Activated B cell treated with CpG ODN at 0.5 μM for 24 hours (primary cell): ENCODE measurements at regions of chr22 and their contacts with region 1.

Region 1: GRCh38 chr22:20418211-20418788 is 19.3 kb downstream of the SCARF2 start:
- DNase-seq: peak; percentile 66
- ATAC-seq: peak; percentile 90
- H3K4me3 Mint-ChIP-seq: peak overlapping the region; percentile 68
- H3K27ac Mint-ChIP-seq: no peak overlapping the region
- H3K4me1 Mint-ChIP-seq: peaks cover 4% of the 10 kb centered on the region
- H3K27me3 Mint-ChIP-seq: peaks cover 3% of the 10 kb centered on the region
- CTCF ChIP-seq: no peak

Region 2: GRCh38 chr22:20456064-20456721 is 37.9 kb after region 1 on chr22:
- CTCF ChIA-PET with region 1: interaction called, 68 read pairs
- POLR2A ChIA-PET with region 1: interaction called, 6 read pairs
- intact Hi-C with region 1: loop called (anchors 1 kb)
- DNase-seq: peak; percentile 60
- ATAC-seq: peak; percentile 100
- H3K4me3 Mint-ChIP-seq: no peak overlapping the region
- H3K27ac Mint-ChIP-seq: no peak overlapping the region
- H3K4me1 Mint-ChIP-seq: peaks cover 20% of the 10 kb centered on the region
- H3K27me3 Mint-ChIP-seq: no peaks in the 10 kb centered on the region
- CTCF ChIP-seq: no peak

Region 3: DNA sequence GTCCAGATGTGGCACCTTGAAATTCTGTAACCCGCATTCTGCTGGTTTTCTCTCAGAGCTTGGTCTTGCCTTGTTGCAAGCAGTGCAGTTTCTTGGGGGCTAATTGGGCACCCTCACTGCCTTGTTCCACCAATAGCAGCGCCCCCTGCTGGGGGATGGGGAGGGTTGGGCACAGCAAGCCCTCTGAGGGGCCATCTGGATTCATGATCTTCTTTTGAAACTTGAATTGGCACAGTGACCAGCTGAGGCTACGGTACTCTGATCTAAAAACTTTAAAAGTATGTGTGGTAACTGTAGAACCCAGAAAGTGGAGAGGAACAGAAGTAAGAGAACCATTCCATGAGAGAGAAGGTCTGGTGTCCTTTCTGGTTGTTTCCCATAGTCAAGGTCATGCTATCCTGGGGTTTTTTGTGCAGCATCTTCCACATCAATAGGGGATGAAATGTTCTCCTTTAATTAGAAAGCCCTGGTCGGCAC is 153.3 kb after region 1 on chr22:
- CTCF ChIA-PET with region 1: interaction called, 11 read pairs
- POLR2A ChIA-PET with region 1: no interaction called
- intact Hi-C with region 1: loop called (anchors 1 kb)
- DNase-seq: peak; percentile 47
- ATAC-seq: peak; percentile 62
- H3K4me3 Mint-ChIP-seq: no peak overlapping the region
- H3K27ac Mint-ChIP-seq: no peak overlapping the region
- H3K4me1 Mint-ChIP-seq: peaks cover 11% of the 10 kb centered on the region
- H3K27me3 Mint-ChIP-seq: no peaks in the 10 kb centered on the region
- CTCF ChIP-seq: peak; percentile 53